MCF 10A (cell line): ENCODE measurements at regions of chr19 and their contacts with region 1.

Region 1: GRCh38 chr19:51422053-51422448 is 4.6 kb upstream of the SIGLEC10 start:
- DNase-seq: peak; percentile 80
- H3K4me3 Mint-ChIP-seq: no peak overlapping the region
- H3K27ac Mint-ChIP-seq: no peak overlapping the region
- H3K4me1 Mint-ChIP-seq: no peaks in the 10 kb centered on the region
- H3K27me3 Mint-ChIP-seq: no peaks in the 10 kb centered on the region
- CTCF ChIP-seq: peak; percentile 95

Region 2: GRCh38 chr19:51346742-51347141 is 75.3 kb before region 1 on chr19:
- CTCF ChIA-PET with region 1: no interaction called
- POLR2A ChIA-PET with region 1: no interaction called
- intact Hi-C with region 1: no loop called
- DNase-seq: no peak
- H3K4me3 Mint-ChIP-seq: no peak overlapping the region
- H3K27ac Mint-ChIP-seq: no peak overlapping the region
- H3K4me1 Mint-ChIP-seq: no peaks in the 10 kb centered on the region
- H3K27me3 Mint-ChIP-seq: no peaks in the 10 kb centered on the region
- CTCF ChIP-seq: no peak

Region 3: DNA sequence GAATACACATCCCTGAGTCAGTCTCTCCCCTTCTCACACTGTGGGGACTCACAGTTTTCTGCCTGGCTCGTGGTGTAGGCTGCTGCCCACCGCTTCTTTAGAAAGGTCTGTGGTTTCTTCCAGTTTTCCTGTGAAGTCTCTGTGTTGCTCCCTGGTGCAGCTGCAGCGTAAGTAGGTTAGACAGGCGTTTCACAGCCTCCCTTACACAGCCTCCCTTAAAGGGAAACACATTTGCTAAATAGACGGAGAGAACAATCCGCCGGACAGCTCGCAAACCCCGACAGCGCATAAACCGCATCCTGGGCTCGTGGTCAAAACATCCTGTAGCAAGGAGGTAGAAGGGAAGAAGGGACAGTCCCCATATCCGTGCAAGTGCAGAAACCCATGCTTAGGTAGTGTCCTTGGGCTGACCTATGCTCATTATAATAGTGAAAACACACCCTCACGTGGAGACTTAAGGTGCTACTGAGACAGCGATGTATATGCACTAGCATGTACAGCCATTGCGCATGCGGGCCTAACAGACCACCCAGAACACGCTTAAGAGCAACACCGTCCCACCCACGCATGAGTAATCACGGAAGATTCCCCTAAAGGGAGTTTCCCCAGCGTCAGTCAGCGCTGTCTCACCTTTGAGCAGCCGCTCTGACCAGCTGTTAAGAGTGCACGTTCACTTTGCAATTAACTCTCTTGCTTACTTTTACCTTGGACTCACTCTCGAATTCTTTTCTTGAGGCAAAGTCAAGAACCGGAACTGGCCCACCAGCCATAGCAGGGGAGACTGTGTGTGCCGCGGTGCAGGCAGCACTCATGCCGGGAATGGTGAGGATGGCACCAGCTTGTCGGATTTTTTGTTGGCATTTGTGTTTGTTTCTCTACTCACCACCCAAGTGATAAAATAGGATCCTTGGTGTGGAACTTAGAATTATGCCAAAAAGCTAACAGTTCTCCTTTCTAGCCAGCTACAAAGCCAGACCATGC is 19.6 kb after region 1 on chr19:
- CTCF ChIA-PET with region 1: interaction called, 11 read pairs
- POLR2A ChIA-PET with region 1: no interaction called
- intact Hi-C with region 1: no loop called
- DNase-seq: peak; percentile 16
- H3K4me3 Mint-ChIP-seq: no peak overlapping the region
- H3K27ac Mint-ChIP-seq: no peak overlapping the region
- H3K4me1 Mint-ChIP-seq: no peaks in the 10 kb centered on the region
- H3K27me3 Mint-ChIP-seq: peaks cover 26% of the 10 kb centered on the region
- CTCF ChIP-seq: no peak

Region 4: GRCh38 chr19:51462276-51462675 is 40.2 kb after region 1 on chr19:
- CTCF ChIA-PET with region 1: no interaction called
- POLR2A ChIA-PET with region 1: no interaction called
- intact Hi-C with region 1: no loop called
- DNase-seq: no peak
- H3K4me3 Mint-ChIP-seq: no peak overlapping the region
- H3K27ac Mint-ChIP-seq: no peak overlapping the region
- H3K4me1 Mint-ChIP-seq: no peaks in the 10 kb centered on the region
- H3K27me3 Mint-ChIP-seq: no peaks in the 10 kb centered on the region
- CTCF ChIP-seq: no peak

Region 5: DNA sequence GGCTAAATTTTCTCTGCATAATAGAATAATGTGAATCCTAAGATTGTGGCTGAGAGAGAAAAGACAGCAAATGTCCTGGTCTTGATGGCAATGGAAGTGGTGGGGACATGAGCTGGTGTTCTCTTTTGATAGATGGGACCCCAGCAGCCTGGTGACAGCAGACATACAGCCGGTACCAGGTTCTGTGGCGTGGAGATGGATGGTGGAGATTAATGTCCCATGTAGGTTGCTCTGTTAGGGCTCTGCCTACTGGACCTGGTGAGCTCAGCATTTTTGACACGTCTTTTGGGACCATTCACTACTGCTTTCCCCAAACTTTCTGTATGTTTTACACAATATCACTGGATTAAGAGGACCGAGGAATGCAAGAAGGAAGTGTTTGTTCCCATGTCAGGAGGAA is 232.7 kb after region 1 on chr19:
- CTCF ChIA-PET with region 1: interaction called, 9 read pairs
- POLR2A ChIA-PET with region 1: no interaction called
- intact Hi-C with region 1: loop called (anchors 5 kb)
- DNase-seq: no peak
- H3K4me3 Mint-ChIP-seq: no peak overlapping the region
- H3K27ac Mint-ChIP-seq: no peak overlapping the region
- H3K4me1 Mint-ChIP-seq: peaks cover 7% of the 10 kb centered on the region
- H3K27me3 Mint-ChIP-seq: peaks cover 22% of the 10 kb centered on the region
- CTCF ChIP-seq: no peak